BJ (cell line): ENCODE measurements at regions of chr7 and their contacts with region 1.

Region 1: GRCh38 chr7:28096713-28097112 is 83.9 kb downstream of the JAZF1 start:
- DNase-seq: no peak
- H3K4me3 ChIP-seq: no peak overlapping the region
- H3K27me3 ChIP-seq: no peaks in the 10 kb centered on the region
- CTCF ChIP-seq: peak; percentile 75

Region 2: GRCh38 chr7:27364344-27365100 is 732.2 kb before region 1 on chr7:
- CTCF ChIA-PET with region 1: no interaction called
- POLR2A ChIA-PET with region 1: no interaction called
- DNase-seq: peak; percentile 41
- H3K4me3 ChIP-seq: peak overlapping the region; percentile 28
- H3K27me3 ChIP-seq: no peaks in the 10 kb centered on the region
- CTCF ChIP-seq: no peak

Region 3: GRCh38 chr7:27961255-27961654 is 135.5 kb before region 1 on chr7:
- CTCF ChIA-PET with region 1: no interaction called
- POLR2A ChIA-PET with region 1: no interaction called
- DNase-seq: no peak
- H3K4me3 ChIP-seq: no peak overlapping the region
- H3K27me3 ChIP-seq: no peaks in the 10 kb centered on the region
- CTCF ChIP-seq: no peak

Region 4: DNA sequence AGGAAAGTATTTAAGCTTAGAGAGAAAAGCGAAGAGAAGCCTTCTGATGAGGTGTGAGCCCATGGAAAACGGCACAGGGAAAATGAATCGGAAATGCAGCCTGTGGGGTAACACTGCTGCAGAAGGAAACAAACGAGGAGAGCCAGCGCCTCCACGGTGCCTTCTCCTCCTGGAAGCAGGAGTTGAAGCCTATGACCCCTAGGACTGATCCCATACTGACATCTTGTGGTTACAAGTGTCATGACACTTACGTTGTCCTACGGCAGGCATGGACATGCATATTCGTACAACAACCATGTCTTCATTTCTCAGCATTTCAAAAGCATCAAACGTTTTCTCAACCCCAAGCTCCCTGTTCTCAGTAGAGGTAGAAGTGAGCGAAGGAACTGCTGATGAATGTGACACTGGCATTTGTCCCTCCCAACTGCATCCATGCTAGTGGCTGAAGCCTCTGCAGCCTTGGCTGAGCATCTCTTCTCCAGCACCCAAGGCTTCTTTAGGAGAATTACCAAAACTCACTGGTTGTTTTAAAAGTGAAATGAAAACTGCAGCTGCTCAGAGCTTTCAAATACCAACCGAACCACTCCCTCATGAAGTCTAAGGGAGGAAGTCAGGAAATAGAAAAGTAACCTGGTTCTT is 76.3 kb before region 1 on chr7:
- CTCF ChIA-PET with region 1: interaction called, 11 read pairs
- POLR2A ChIA-PET with region 1: no interaction called
- DNase-seq: no peak
- H3K4me3 ChIP-seq: no peak overlapping the region
- H3K27me3 ChIP-seq: no peaks in the 10 kb centered on the region
- CTCF ChIP-seq: peak; percentile 82

Region 5: GRCh38 chr7:28037220-28038010 is 59.3 kb before region 1 on chr7:
- CTCF ChIA-PET with region 1: interaction called, 10 read pairs
- POLR2A ChIA-PET with region 1: no interaction called
- DNase-seq: peak; percentile 99
- H3K4me3 ChIP-seq: no peak overlapping the region
- H3K27me3 ChIP-seq: no peaks in the 10 kb centered on the region
- CTCF ChIP-seq: no peak

Region 6: DNA sequence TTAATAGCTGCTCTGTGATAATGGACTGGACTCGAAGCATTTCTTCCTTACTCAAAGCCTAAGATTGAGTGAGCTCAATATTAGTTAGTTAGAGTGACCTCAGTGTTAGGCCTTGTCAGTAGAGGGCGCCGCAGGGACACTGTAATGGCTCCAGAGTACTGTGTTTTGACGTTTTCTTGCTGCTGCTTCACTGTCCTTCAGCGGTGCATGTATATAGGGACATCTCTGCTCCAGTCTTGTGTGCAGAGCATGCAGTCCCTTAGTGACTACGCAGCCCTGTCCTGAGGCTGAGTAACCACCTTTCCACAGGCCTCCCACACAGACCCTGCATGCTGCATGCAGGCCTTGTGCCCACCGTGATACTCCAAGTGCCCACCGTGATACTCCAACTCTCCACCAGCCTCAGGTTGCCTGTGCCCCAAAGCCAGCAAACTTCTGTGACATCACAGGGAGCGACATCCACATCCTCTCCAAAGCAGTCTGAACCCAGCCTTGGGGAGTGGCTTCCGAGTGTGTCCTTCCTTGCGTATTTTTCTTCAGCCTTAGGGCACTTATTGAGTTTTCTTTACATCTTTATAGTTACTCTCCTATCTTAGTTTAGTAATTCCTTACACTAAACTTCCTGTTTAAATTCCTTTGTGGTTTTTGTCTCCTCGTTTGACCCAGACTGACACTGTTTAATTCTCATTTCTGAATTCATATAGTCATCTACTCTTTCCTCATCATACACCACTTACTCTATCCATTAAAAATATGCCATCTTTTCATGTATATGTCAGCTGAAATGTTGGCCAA is 34.3 kb before region 1 on chr7:
- CTCF ChIA-PET with region 1: interaction called, 108 read pairs
- POLR2A ChIA-PET with region 1: no interaction called
- DNase-seq: no peak
- H3K4me3 ChIP-seq: no peak overlapping the region
- H3K27me3 ChIP-seq: no peaks in the 10 kb centered on the region
- CTCF ChIP-seq: peak; percentile 78

Region 7: DNA sequence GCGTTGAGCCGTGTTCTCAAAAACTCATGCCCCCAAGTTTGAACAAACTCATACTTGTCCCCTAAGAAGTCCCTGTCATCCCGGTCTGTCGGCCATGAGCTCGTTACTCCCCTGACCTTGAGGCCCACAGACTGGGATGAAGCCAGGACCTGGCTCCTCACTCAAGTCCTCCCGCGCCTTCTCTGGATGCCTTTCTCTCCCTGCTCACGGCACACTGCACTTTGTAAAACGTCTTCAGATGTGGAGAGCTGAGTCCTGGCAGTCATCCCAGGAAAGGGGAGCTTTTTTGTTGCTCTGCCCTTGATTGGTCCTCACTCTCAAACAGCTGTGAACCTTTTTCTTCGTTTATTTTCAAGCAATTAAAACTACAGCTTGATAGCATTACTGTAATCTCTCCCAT is 26.9 kb before region 1 on chr7:
- CTCF ChIA-PET with region 1: interaction called, 33 read pairs
- POLR2A ChIA-PET with region 1: no interaction called
- DNase-seq: no peak
- H3K4me3 ChIP-seq: no peak overlapping the region
- H3K27me3 ChIP-seq: no peaks in the 10 kb centered on the region
- CTCF ChIP-seq: no peak

Region 8: GRCh38 chr7:28078036-28078901 is 18.4 kb before region 1 on chr7:
- CTCF ChIA-PET with region 1: interaction called, 23 read pairs
- POLR2A ChIA-PET with region 1: no interaction called
- DNase-seq: no peak
- H3K4me3 ChIP-seq: no peak overlapping the region
- H3K27me3 ChIP-seq: no peaks in the 10 kb centered on the region
- CTCF ChIP-seq: peak; percentile 98

Region 9: GRCh38 chr7:28179120-28180030 is 82.7 kb after region 1 on chr7:
- CTCF ChIA-PET with region 1: interaction called, 11 read pairs
- POLR2A ChIA-PET with region 1: interaction called, 3 read pairs
- DNase-seq: no peak
- H3K4me3 ChIP-seq: peak overlapping the region; percentile 75
- H3K27me3 ChIP-seq: no peaks in the 10 kb centered on the region
- CTCF ChIP-seq: no peak

Region 10: DNA sequence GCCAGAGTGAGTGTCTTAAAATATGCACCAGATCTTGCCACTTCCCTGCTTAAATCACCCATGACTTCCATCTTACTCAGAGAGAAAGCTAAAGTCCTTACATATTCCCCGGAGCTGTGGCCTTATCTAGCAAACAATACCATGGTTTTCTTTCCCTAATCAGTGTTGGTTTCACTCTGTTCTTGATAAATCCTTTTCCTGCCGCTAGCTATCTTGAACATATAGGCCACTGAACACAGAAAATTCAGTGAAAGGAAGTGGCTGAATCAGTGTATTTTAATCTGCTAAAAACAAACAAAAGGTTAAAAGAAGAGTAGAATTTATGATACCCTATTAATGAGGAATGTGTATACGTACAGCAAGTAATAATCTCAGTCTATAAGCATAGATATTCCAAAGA is 125.9 kb after region 1 on chr7:
- CTCF ChIA-PET with region 1: no interaction called
- POLR2A ChIA-PET with region 1: no interaction called
- DNase-seq: no peak
- H3K4me3 ChIP-seq: no peak overlapping the region
- H3K27me3 ChIP-seq: peaks cover 3% of the 10 kb centered on the region
- CTCF ChIP-seq: no peak

Region 11: GRCh38 chr7:28530175-28530802 is 433.6 kb after region 1 on chr7:
- CTCF ChIA-PET with region 1: no interaction called
- POLR2A ChIA-PET with region 1: no interaction called
- DNase-seq: peak; percentile 2
- H3K4me3 ChIP-seq: no peak overlapping the region
- H3K27me3 ChIP-seq: peaks cover 1% of the 10 kb centered on the region; the same call in 1 of the 2 replicates
- CTCF ChIP-seq: no peak